Heart left ventricle (tissue), 16 donors: ENCODE measurements at regions of chr14 and their contacts with region 1.

Region 1: DNA sequence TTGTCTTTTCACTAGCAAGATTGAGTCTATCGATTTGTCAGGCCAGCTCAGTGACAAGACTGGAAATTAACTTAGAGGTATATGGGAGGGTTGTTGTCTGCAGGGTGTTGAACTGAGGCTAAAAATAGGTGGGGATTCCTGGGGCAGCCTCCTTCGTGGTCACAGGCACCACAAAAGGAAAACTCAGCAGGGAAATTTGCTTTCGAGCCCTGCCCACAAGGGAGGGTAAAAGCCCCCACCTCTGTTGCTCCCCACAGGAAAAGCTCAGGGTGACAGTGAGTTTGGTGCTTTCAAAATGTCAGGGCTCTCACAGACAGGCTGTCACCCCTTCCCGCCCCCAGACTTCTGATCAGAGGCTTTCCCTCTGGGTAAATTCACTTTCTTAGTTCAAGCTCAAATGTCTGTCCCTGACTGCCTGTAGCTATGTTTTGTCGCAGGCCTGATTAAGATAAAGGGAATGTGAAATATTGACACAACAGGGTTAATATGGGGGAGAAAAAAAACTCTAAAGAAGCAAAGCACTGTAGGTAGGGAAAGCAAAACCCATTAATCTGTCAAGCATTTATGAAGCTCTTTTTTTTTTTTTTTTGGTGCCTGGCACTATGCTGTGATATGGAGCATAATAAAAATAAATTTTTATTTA is 11.7 kb upstream of the NFKBIA start:
- DNase-seq: no peak
- ATAC-seq: no peak
- H3K4me3 ChIP-seq: no peak overlapping the region
- H3K27ac ChIP-seq: peak overlapping the region in 3 of 12 donors; percentile 5 to 72 (median 60)
- H3K4me1 ChIP-seq: peaks cover 2 to 38% (median 21%) of the 10 kb centered on the region in 12 donors
- H3K27me3 ChIP-seq: no peaks in the 10 kb centered on the region
- CTCF ChIP-seq: no peak
- POLR2A ChIP-seq: no peak

Region 2: GRCh38 chr14:34875031-34875922 is 541.0 kb before region 1 on chr14 and contains the start of gene BAZ1A:
- intact Hi-C with region 1: loop called in 1 of 10 experiments (anchors 10 kb)
- DNase-seq: peak; percentile 64 to 81 (median 68)
- ATAC-seq: peak; percentile 45 to 71 (median 69)
- H3K4me3 ChIP-seq: peak within 1 kb of the TSS; percentile 66 to 97 (median 86)
- H3K27ac ChIP-seq: peak within 1 kb of the TSS; percentile 93 to 100 (median 98)
- H3K4me1 ChIP-seq: peaks cover 0 to 26% (median 6%) of the 10 kb centered on the region in 12 donors
- H3K27me3 ChIP-seq: no peaks in the 10 kb centered on the region
- CTCF ChIP-seq: peak in 9 of 12 donors; percentile 7 to 45 (median 19)
- POLR2A ChIP-seq: peak in 1 of 2 donors; percentile 94
- total RNA-seq, gene BAZ1A: 3.8 to 20.3 (median 6.5) TPM

Region 3: DNA sequence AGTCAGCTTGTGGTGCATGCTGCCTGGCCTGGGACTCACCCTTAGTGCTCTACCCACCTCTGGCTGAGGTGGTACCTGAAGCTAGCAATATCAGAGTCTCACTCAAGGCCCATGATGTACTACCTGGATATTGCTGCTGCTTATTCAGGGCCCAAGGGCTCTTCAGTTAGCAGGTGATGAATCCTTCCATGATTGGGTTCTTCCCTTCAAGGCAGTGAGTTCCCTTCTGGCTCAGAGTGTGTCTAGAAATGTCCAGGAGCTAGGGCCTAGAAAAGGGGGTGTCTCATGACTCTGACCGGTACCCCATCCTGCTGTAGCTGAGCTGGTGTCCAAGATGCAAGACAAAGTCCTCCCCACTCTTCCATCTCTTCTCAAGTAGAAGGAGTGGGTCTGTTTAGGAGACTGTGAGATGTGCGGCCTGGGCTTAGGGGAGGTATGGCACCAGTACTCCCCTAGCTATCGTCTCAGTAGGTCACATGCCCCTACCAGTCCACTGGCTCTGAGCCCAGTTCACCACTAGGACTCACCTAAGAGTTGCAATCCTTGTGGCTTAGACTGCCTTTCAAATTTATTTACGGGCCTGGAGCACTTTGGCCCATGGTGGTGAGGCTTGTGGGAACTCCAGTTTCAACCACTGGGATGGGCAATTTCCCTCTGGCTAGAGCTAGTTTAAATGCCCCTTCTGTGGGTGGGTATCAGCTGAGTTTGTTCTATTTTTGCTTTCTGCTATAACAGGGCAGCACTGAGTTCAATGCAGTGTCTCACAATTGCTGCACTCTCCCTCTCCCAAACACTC is 281.7 kb before region 1 on chr14:
- intact Hi-C with region 1: loop called in 2 of 10 experiments (anchors 5 kb)
- DNase-seq: peak in 1 of 5 donors; percentile 41
- ATAC-seq: peak in 3 of 4 donors; percentile 49 to 56 (median 52)
- H3K4me3 ChIP-seq: no peak overlapping the region
- H3K27ac ChIP-seq: no peak overlapping the region
- H3K4me1 ChIP-seq: peaks cover 0 to 12% (median 3%) of the 10 kb centered on the region in 12 donors
- H3K27me3 ChIP-seq: no peaks in the 10 kb centered on the region
- CTCF ChIP-seq: no peak
- POLR2A ChIP-seq: no peak

Region 4: GRCh38 chr14:35215110-35215876 is 200.9 kb before region 1 on chr14:
- intact Hi-C with region 1: loop called in 7 of 10 experiments (anchors 2 to 5 kb)
- DNase-seq: no peak
- ATAC-seq: peak in 3 of 4 donors; percentile 52 to 64 (median 59)
- H3K4me3 ChIP-seq: no peak overlapping the region
- H3K27ac ChIP-seq: peak overlapping the region in 1 of 12 donors; percentile 14
- H3K4me1 ChIP-seq: peaks cover 0 to 8% (median 0%) of the 10 kb centered on the region in 12 donors
- H3K27me3 ChIP-seq: no peaks in the 10 kb centered on the region
- CTCF ChIP-seq: peak; percentile 28 to 70 (median 60)
- POLR2A ChIP-seq: no peak

Region 5: DNA sequence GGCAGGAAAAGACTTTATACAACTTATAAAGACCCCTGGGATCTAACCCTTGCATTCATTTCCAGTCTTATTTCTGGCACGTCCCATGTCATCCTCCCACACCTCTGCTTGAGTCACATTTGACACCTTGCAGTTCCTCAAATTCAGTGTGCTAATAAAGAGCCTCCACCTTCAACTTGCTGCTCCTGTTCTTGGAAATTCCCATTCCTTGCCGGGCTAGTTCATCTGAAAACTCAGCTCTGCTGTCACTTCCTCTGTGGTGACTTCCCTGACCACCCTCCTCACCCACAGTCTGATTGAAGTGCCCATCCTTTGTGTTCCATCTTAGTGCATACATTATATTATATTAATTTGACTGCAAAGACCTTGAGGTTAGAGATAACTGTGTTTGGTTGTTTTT is 161.5 kb before region 1 on chr14:
- intact Hi-C with region 1: loop called in 1 of 10 experiments (anchors 5 kb)
- DNase-seq: no peak
- ATAC-seq: no peak
- H3K4me3 ChIP-seq: no peak overlapping the region
- H3K27ac ChIP-seq: no peak overlapping the region
- H3K4me1 ChIP-seq: peaks cover 0 to 16% (median 7%) of the 10 kb centered on the region in 12 donors
- H3K27me3 ChIP-seq: no peaks in the 10 kb centered on the region
- CTCF ChIP-seq: no peak
- POLR2A ChIP-seq: no peak

Region 6: GRCh38 chr14:35470755-35471154 is 54.5 kb after region 1 on chr14:
- intact Hi-C with region 1: no loop called
- DNase-seq: no peak
- ATAC-seq: no peak
- H3K4me3 ChIP-seq: no peak overlapping the region
- H3K27ac ChIP-seq: no peak overlapping the region
- H3K4me1 ChIP-seq: no peaks in the 10 kb centered on the region
- H3K27me3 ChIP-seq: peaks cover 0 to 2% (median 0%) of the 10 kb centered on the region in 9 donors
- CTCF ChIP-seq: no peak
- POLR2A ChIP-seq: no peak

Region 7: DNA sequence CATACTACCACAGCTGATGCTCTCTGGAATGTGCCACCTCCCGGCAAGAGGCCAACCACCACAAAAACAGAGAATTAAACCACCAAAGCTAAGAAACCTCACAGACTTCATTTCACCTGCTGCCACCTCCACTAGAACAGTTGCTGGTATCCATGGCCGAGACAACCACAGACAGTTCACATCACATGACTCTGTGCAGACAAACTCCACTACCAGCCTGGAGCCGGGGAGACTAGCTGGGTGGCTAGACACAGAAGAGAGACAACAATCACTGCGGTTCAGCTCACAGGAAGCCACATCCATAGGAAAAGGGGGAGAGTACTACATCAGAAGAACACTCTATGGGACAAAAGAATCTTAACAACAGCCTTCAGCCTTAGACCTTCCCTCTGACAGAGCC is 314.6 kb after region 1 on chr14:
- intact Hi-C with region 1: no loop called
- DNase-seq: no peak
- ATAC-seq: no peak
- H3K4me3 ChIP-seq: no peak overlapping the region
- H3K27ac ChIP-seq: no peak overlapping the region
- H3K4me1 ChIP-seq: no peaks in the 10 kb centered on the region
- H3K27me3 ChIP-seq: no peaks in the 10 kb centered on the region
- CTCF ChIP-seq: no peak
- POLR2A ChIP-seq: no peak

Region 8: DNA sequence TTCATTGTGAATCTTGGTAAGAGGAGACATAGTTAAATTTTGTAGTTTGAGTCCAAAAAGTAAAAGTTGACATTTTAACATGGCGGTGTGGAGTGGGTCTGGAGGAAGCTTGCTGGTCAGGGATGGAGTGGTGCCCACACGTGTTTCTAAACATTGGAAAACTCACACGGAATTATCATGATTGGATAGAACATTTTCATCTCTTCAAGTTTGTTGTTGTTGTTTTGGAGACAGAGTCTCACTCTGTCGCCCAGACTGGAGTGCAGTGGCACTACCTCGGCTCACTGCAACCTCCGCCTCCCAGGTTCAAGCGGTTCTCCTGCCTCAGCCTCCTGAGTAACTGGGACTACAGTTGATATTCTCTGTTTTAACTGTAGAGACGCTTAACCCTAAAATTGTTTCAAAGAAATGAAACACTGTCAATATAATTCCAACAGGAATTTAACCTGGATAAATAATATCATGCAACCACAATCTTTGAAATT is 904.7 kb after region 1 on chr14:
- intact Hi-C with region 1: no loop called
- DNase-seq: peak in 1 of 5 donors; percentile 7
- ATAC-seq: no peak
- H3K4me3 ChIP-seq: peak overlapping the region; percentile 76 to 93 (median 86)
- H3K27ac ChIP-seq: peak overlapping the region in 8 of 12 donors; percentile 39 to 84 (median 78)
- H3K4me1 ChIP-seq: peaks cover 0 to 26% (median 17%) of the 10 kb centered on the region in 12 donors
- H3K27me3 ChIP-seq: peaks cover 0 to 10% (median 0%) of the 10 kb centered on the region in 9 donors
- CTCF ChIP-seq: no peak
- POLR2A ChIP-seq: no peak